A673 (cell line): ENCODE measurements at regions of chr1 and their contacts with region 1.

Region 1: GRCh38 chr1:85109475-85109874 is 61.2 kb upstream of the MCOLN3 start:
- DNase-seq: peak; percentile 79
- H3K4me3 ChIP-seq: no peak overlapping the region
- H3K27ac ChIP-seq: no peak overlapping the region
- H3K4me1 ChIP-seq: no peaks in the 10 kb centered on the region
- H3K27me3 ChIP-seq: no peaks in the 10 kb centered on the region
- CTCF ChIP-seq: peak; percentile 87

Region 2: DNA sequence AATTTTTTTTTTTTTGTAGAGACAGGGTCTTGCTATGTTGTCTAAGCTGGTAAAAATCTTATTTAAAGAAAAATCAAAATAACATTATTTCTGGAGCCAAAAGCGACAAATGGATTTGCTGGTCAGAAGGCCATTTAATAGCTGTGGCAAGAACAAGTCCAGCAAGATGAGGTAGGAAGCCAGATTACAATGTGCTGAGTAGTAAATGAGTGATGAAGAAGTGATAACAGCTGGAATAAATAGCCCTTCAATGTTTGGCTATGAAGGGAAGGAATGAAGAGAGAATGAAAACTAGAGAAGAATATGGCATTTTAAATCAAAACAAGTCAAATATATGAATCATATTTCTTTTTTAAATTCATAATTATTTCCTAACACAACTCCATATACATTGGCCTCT is 56.9 kb after region 1 on chr1:
- CTCF ChIA-PET with region 1: interaction called, 11 read pairs
- POLR2A ChIA-PET with region 1: no interaction called
- intact Hi-C with region 1: no loop called
- DNase-seq: no peak
- H3K4me3 ChIP-seq: no peak overlapping the region
- H3K27ac ChIP-seq: no peak overlapping the region
- H3K4me1 ChIP-seq: no peaks in the 10 kb centered on the region
- H3K27me3 ChIP-seq: no peaks in the 10 kb centered on the region
- CTCF ChIP-seq: no peak

Region 3: GRCh38 chr1:85259118-85259911 is 149.8 kb after region 1 on chr1 and contains the start of gene C1orf52:
- CTCF ChIA-PET with region 1: interaction called, 20 read pairs
- POLR2A ChIA-PET with region 1: no interaction called
- intact Hi-C with region 1: loop called (anchors 1 kb)
- DNase-seq: peak; percentile 96
- H3K4me3 ChIP-seq: peak within 1 kb of the TSS; percentile 78
- H3K27ac ChIP-seq: peak within 1 kb of the TSS; percentile 73
- H3K4me1 ChIP-seq: peaks cover 8% of the 10 kb centered on the region
- H3K27me3 ChIP-seq: no peaks in the 10 kb centered on the region
- CTCF ChIP-seq: peak; percentile 99
- total RNA-seq, gene C1orf52: 30.2 and 31.9 TPM in 2 replicates